Activated naive CD4-positive, alpha-beta T cell treated with anti-CD3 and anti-CD28 coated beads for 36 hours (primary cell): ENCODE measurements at regions of chr13 and their contacts with region 1.

Region 1: DNA sequence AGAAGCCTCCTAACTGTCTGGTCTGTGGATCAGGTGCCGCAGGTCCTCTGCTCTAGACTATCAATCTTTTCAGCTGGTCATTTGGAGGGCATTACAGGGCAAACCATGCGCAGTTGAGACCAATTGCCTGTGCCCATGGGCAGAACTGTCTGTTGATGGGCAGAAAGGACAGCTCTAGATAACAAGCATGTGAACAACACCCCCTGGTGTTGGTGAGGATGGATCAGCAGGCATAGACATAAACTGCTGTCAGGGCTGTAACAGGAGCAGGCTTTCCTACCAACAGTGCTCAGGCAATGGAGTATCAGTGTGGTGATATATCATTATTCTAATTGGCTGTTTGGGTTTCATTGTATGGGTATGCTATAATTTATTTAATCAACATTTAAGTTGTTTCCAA is 104.7 kb upstream of the KL start:
- DNase-seq: peak; percentile 56
- H3K4me3 Mint-ChIP-seq: no peak overlapping the region
- H3K27ac Mint-ChIP-seq: no peak overlapping the region
- H3K4me1 Mint-ChIP-seq: peaks cover 2% of the 10 kb centered on the region
- H3K27me3 Mint-ChIP-seq: peaks cover 3% of the 10 kb centered on the region

Region 2: GRCh38 chr13:32315238-32316027 is 596.1 kb before region 1 on chr13 and contains the starts of genes BRCA2 and ZAR1L:
- CTCF ChIA-PET with region 1: no interaction called
- intact Hi-C with region 1: loop called (anchors 10 kb)
- DNase-seq: peak; percentile 91
- H3K4me3 Mint-ChIP-seq: peak within 1 kb of the TSS; percentile 92
- H3K27ac Mint-ChIP-seq: peak within 1 kb of the TSS; percentile 98
- H3K4me1 Mint-ChIP-seq: peaks cover 12% of the 10 kb centered on the region
- H3K27me3 Mint-ChIP-seq: no peaks in the 10 kb centered on the region
- total RNA-seq, gene BRCA2: 17.3 to 21.3 TPM
- total RNA-seq, gene ZAR1L: not detected

Region 3: DNA sequence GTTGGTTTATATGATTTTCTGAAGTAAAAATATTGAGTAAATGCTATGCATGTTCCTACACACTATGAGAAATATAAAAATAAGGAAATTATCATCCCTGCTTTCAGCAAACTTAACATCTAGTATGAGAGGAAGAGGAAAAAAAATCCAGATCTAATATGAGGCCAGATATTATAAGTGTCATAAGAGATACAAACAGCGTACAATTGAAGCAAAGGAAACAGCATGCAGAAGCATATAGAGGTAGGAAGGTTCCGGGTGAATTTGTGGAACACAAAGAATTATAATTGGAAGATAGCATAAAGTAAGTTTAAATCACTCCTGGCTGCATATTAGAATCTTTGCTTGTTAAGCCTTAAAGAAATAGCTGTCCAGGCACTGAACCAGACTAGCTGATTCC is 237.0 kb before region 1 on chr13:
- CTCF ChIA-PET with region 1: no interaction called
- intact Hi-C with region 1: loop called (anchors 5 kb)
- DNase-seq: no peak
- H3K4me3 Mint-ChIP-seq: no peak overlapping the region
- H3K27ac Mint-ChIP-seq: no peak overlapping the region
- H3K4me1 Mint-ChIP-seq: no peaks in the 10 kb centered on the region
- H3K27me3 Mint-ChIP-seq: no peaks in the 10 kb centered on the region

Region 4: GRCh38 chr13:33401238-33401637 is 489.7 kb after region 1 on chr13:
- CTCF ChIA-PET with region 1: no interaction called
- intact Hi-C with region 1: no loop called
- DNase-seq: no peak
- H3K4me3 Mint-ChIP-seq: no peak overlapping the region
- H3K27ac Mint-ChIP-seq: no peak overlapping the region
- H3K4me1 Mint-ChIP-seq: no peaks in the 10 kb centered on the region
- H3K27me3 Mint-ChIP-seq: no peaks in the 10 kb centered on the region